PC-9 (cell line): ENCODE measurements at regions of chr2 and their contacts with region 1.

Region 1: DNA sequence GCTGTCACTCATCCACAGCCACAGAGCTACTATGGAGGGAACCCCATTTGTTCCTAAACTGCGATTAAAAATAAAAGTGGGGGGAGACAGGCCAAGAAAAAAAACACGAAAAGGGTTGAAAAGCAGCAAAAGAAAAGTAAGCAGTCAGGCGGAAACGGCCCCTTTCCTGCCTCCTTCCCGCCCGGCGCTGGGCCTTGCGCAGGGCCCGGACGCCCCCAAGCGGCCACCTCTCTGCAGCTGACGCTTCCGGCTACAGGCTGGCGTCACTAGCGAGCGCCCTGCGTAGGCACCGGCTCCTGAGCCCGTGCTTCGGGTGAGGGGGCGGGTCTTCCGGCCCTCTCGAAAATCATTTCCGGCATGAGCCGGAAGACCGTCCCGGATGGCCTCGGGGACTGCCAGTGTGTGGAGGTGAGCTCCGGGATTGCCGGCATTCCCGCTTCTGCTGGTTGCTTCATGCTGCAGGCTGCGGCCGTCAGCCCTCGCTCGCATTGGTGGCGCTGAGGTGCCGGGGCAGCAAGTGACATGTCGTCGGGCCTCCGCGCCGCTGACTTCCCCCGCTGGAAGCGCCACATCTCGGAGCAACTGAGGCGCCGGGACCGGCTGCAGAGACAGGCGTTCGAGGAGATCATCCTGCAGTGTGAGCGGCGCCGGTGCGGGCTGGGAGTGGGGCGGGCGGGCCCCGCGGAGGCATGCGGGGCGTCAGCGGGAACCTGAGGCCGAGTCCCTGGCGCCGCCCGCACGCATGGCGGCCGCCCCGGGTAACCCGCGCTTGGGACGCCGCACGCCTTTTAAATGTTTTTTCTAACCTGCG is at the start of gene ATG16L1:
- DNase-seq: peak; percentile 96 to 99
- H3K4me3 ChIP-seq: peak within 1 kb of the TSS; percentile 94
- H3K27ac ChIP-seq: peak within 1 kb of the TSS; percentile 62
- H3K4me1 ChIP-seq: peaks cover 58% of the 10 kb centered on the region
- H3K27me3 ChIP-seq: no peaks in the 10 kb centered on the region
- CTCF ChIP-seq: peak; percentile 94
- total RNA-seq, gene ATG16L1: 55.7 and 63.9 TPM in 2 replicates

Region 2: GRCh38 chr2:232761301-232761907 is 490.1 kb before region 1 on chr2:
- CTCF ChIA-PET with region 1: no interaction called
- POLR2A ChIA-PET with region 1: no interaction called
- intact Hi-C with region 1: loop called (anchors 1 kb)
- DNase-seq: peak; percentile 47 to 71
- H3K4me3 ChIP-seq: no peak overlapping the region
- H3K27ac ChIP-seq: no peak overlapping the region
- H3K4me1 ChIP-seq: no peaks in the 10 kb centered on the region
- H3K27me3 ChIP-seq: no peaks in the 10 kb centered on the region
- CTCF ChIP-seq: peak; percentile 85

Region 3: DNA sequence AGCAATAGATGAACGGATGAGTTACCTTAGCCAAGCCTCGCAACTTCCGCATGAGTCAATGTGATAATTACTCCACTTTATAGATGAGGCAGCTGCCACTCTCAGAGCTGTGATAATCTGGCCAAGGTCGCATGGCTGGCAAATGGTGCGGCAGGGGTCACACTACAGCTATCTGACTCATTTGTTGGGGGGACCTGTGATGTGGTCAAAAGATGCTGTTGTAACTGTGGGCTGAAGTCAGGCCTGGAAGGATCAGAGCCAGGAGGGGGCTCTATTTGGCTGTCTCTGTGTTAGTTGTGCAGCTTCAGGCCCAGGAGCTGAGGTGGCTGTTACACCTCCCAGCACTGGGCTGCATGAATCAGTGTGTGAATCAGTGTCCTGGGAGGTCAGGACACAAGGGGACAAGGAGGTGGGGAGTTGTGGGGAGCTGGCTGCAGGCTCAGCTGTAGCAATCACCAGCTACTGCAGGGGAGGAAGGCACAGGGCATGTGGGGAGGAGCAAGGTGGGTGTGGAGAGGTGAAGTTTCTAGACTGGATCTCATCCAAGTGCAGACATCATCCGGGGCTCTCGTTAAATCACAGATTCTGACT is 271.5 kb before region 1 on chr2:
- CTCF ChIA-PET with region 1: interaction called, 6 read pairs
- POLR2A ChIA-PET with region 1: no interaction called
- intact Hi-C with region 1: loop called (anchors 1 kb)
- DNase-seq: peak; percentile 91 to 99
- H3K4me3 ChIP-seq: peak overlapping the region; percentile 33; the same call in 1 of the 2 replicates
- H3K27ac ChIP-seq: peak overlapping the region; percentile 95
- H3K4me1 ChIP-seq: peaks cover 51% of the 10 kb centered on the region
- H3K27me3 ChIP-seq: no peaks in the 10 kb centered on the region
- CTCF ChIP-seq: peak; percentile 44; the same call in 1 of the 2 replicates

Region 4: GRCh38 chr2:233053928-233054784 is 197.4 kb before region 1 on chr2:
- CTCF ChIA-PET with region 1: interaction called, 4 read pairs
- POLR2A ChIA-PET with region 1: interaction called, 3 read pairs
- intact Hi-C with region 1: loop called (anchors 1 kb)
- DNase-seq: peak in 1 of 2 experiments; percentile 64
- H3K4me3 ChIP-seq: no peak overlapping the region
- H3K27ac ChIP-seq: no peak overlapping the region
- H3K4me1 ChIP-seq: peaks cover 32% of the 10 kb centered on the region
- H3K27me3 ChIP-seq: no peaks in the 10 kb centered on the region
- CTCF ChIP-seq: peak; percentile 97

Region 5: GRCh38 chr2:233210843-233211547 is 40.5 kb before region 1 on chr2:
- CTCF ChIA-PET with region 1: no interaction called
- POLR2A ChIA-PET with region 1: no interaction called
- intact Hi-C with region 1: loop called (anchors 1 kb)
- DNase-seq: peak; percentile 92 to 97
- H3K4me3 ChIP-seq: no peak overlapping the region
- H3K27ac ChIP-seq: peak overlapping the region; percentile 28; the same call in 1 of the 2 replicates
- H3K4me1 ChIP-seq: peaks cover 57% of the 10 kb centered on the region
- H3K27me3 ChIP-seq: no peaks in the 10 kb centered on the region
- CTCF ChIP-seq: no peak

Region 6: DNA sequence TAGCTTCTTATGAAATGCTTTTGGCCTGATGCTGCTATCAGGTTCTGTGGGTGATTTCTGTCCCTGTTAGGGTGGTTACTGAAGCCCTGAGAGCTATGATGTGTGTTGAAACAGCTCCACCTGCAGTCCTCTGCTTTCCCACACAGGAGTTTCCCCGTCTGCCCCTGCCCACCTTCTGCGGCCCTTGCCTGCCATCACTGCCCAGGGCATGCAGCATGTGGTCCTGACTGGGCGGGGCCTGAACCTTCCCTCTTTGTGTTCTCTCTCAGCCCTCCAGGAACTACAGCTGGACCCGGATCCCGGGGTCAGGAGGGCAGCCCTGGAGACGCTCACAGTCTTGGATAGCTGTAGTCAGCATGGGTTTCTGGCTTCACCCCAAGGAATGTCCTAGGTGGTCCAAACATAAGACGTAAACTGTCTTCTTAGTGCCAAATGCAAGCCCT is 581.4 kb after region 1 on chr2:
- CTCF ChIA-PET with region 1: interaction called, 3 read pairs
- POLR2A ChIA-PET with region 1: no interaction called
- intact Hi-C with region 1: loop called (anchors 2 kb)
- DNase-seq: peak; percentile 77 to 83
- H3K4me3 ChIP-seq: no peak overlapping the region
- H3K27ac ChIP-seq: no peak overlapping the region
- H3K4me1 ChIP-seq: no peaks in the 10 kb centered on the region
- H3K27me3 ChIP-seq: no peaks in the 10 kb centered on the region
- CTCF ChIP-seq: peak; percentile 74

Region 7: GRCh38 chr2:234019888-234020287 is 768.4 kb after region 1 on chr2:
- CTCF ChIA-PET with region 1: no interaction called
- POLR2A ChIA-PET with region 1: no interaction called
- intact Hi-C with region 1: no loop called
- DNase-seq: no peak
- H3K4me3 ChIP-seq: no peak overlapping the region
- H3K27ac ChIP-seq: no peak overlapping the region
- H3K4me1 ChIP-seq: no peaks in the 10 kb centered on the region
- H3K27me3 ChIP-seq: no peaks in the 10 kb centered on the region
- CTCF ChIP-seq: no peak